Activated naive CD4-positive, alpha-beta T cell treated with anti-CD3 and anti-CD28 coated beads for 36 hours (primary cell): ENCODE measurements at regions of chr6 and their contacts with region 1.

Region 1: DNA sequence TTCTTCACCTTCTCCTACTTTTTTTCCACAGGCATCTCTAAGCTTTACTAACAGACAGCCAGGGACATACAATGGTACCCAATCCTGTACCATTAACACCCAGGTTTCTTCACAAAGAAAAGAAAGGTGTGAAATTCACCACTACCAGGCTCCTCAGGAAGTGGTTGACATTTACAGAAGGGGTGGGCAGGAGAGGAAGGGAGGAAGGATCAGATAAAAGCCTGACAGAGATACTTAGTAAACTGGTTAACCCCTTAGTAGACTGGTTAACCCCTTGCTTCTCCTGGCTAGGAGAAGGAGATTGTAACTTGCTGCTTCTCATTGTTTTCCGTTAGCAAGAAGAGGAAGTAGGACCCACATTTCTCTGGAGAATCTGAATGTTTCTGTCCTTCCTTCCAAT is 7.2 kb downstream of the SAMD3 start:
- DNase-seq: peak; percentile 49
- H3K4me3 Mint-ChIP-seq: peak overlapping the region; percentile 60
- H3K27ac Mint-ChIP-seq: peak overlapping the region; percentile 37
- H3K4me1 Mint-ChIP-seq: peaks cover 50% of the 10 kb centered on the region
- H3K27me3 Mint-ChIP-seq: no peaks in the 10 kb centered on the region

Region 2: GRCh38 chr6:130076512-130076911 is 139.0 kb before region 1 on chr6:
- CTCF ChIA-PET with region 1: no interaction called
- intact Hi-C with region 1: no loop called
- DNase-seq: no peak
- H3K4me3 Mint-ChIP-seq: no peak overlapping the region
- H3K27ac Mint-ChIP-seq: no peak overlapping the region
- H3K4me1 Mint-ChIP-seq: peaks cover 14% of the 10 kb centered on the region
- H3K27me3 Mint-ChIP-seq: no peaks in the 10 kb centered on the region

Region 3: GRCh38 chr6:130093546-130093945 is 122.0 kb before region 1 on chr6:
- CTCF ChIA-PET with region 1: no interaction called
- intact Hi-C with region 1: no loop called
- DNase-seq: no peak
- H3K4me3 Mint-ChIP-seq: no peak overlapping the region
- H3K27ac Mint-ChIP-seq: no peak overlapping the region
- H3K4me1 Mint-ChIP-seq: peaks cover 15% of the 10 kb centered on the region
- H3K27me3 Mint-ChIP-seq: no peaks in the 10 kb centered on the region

Region 4: GRCh38 chr6:130138116-130138908 is 77.2 kb before region 1 on chr6:
- CTCF ChIA-PET with region 1: no interaction called
- intact Hi-C with region 1: loop called (anchors 2 kb)
- DNase-seq: peak; percentile 27
- H3K4me3 Mint-ChIP-seq: peak overlapping the region; percentile 55
- H3K27ac Mint-ChIP-seq: peak overlapping the region; percentile 84
- H3K4me1 Mint-ChIP-seq: peaks cover 57% of the 10 kb centered on the region
- H3K27me3 Mint-ChIP-seq: no peaks in the 10 kb centered on the region

Region 5: DNA sequence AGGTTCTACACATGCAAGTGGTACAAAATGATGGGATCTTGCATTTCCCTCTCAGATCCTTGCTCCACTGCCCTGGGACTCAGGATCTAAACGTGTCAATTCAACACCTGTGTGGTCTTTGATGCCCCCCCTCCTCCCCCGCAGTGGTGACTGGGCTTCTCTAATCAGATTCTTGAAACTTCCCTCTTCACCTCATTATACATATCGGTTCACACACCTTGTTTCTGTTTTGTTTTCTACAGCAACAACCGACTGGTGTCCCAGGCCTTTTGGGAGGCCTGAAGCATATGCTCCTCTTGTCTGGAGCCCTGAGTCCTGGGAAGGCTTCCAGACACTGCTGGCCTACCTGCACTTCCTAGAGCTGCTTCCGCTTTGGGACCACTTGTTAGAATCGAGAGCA is 12.7 kb before region 1 on chr6:
- CTCF ChIA-PET with region 1: interaction called, 5 read pairs
- intact Hi-C with region 1: loop called (anchors 1 kb)
- DNase-seq: peak; percentile 71
- H3K4me3 Mint-ChIP-seq: peak overlapping the region; percentile 25
- H3K27ac Mint-ChIP-seq: no peak overlapping the region
- H3K4me1 Mint-ChIP-seq: peaks cover 41% of the 10 kb centered on the region
- H3K27me3 Mint-ChIP-seq: no peaks in the 10 kb centered on the region

Region 6: GRCh38 chr6:130322673-130323268 is 107.2 kb after region 1 on chr6:
- CTCF ChIA-PET with region 1: no interaction called
- intact Hi-C with region 1: no loop called
- DNase-seq: peak; percentile 69
- H3K4me3 Mint-ChIP-seq: no peak overlapping the region
- H3K27ac Mint-ChIP-seq: no peak overlapping the region
- H3K4me1 Mint-ChIP-seq: no peaks in the 10 kb centered on the region
- H3K27me3 Mint-ChIP-seq: no peaks in the 10 kb centered on the region